Heart left ventricle (tissue), 16 donors: ENCODE measurements at regions of chr4 and their contacts with region 1.

Region 1: DNA sequence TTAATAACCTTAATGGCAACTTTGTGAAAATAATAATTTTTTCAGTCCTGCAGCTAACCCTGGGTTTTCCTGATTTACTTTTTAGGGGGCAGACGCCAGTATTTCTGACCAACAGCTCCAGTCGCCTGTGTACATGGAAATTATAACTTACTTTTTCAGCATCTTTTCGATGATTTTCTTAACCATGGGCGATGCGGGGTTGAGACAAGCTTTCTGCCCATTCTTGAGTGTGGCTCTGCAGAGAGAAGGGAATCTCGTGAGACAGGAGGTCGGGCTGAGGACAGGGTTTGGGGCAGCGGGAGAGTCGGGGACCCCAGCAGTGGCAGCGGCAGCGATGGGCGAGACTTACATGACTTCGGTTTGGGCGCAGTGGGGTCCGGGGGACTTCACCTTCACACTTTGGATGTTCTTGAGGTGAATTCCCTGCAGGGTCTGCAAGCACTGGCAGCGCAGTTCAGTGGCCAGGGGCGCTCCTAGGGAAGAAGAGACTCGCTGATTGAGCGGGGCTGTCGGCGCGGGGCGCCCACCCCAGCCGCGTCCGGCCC is 473 bp downstream of the CXCL2 start:
- DNase-seq: peak in 3 of 5 donors; percentile 26 to 52 (median 38)
- ATAC-seq: peak in 1 of 4 donors; percentile 21
- H3K4me3 ChIP-seq: peak overlapping the region; percentile 38 to 78 (median 65)
- H3K27ac ChIP-seq: peak overlapping the region; percentile 70 to 91 (median 85)
- H3K4me1 ChIP-seq: peaks cover 0 to 19% (median 2%) of the 10 kb centered on the region in 12 donors
- H3K27me3 ChIP-seq: peaks cover 0 to 5% (median 0%) of the 10 kb centered on the region in 9 donors
- CTCF ChIP-seq: no peak
- POLR2A ChIP-seq: no peak

Region 2: DNA sequence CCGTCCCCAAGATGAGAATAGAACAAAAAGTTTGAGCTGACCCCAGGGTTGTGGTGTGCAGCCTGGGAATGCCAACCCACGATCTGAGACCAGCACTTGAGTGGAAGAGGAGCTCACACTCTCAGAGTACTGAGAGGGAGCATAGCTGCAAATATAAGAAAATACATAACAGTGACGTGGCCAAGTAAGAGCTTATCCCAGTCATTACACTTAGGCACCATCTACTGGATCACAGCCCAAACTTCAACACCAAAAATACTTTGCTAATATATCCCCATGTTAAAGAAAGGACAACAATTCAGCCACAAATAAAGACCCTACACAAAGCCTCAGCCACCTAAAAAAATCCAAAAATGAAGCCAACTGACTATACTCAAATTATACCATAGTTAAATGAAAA is 295.3 kb before region 1 on chr4:
- intact Hi-C with region 1: no loop called
- DNase-seq: no peak
- ATAC-seq: no peak
- H3K4me3 ChIP-seq: no peak overlapping the region
- H3K27ac ChIP-seq: no peak overlapping the region
- H3K4me1 ChIP-seq: no peaks in the 10 kb centered on the region
- H3K27me3 ChIP-seq: no peaks in the 10 kb centered on the region
- CTCF ChIP-seq: no peak
- POLR2A ChIP-seq: no peak

Region 3: DNA sequence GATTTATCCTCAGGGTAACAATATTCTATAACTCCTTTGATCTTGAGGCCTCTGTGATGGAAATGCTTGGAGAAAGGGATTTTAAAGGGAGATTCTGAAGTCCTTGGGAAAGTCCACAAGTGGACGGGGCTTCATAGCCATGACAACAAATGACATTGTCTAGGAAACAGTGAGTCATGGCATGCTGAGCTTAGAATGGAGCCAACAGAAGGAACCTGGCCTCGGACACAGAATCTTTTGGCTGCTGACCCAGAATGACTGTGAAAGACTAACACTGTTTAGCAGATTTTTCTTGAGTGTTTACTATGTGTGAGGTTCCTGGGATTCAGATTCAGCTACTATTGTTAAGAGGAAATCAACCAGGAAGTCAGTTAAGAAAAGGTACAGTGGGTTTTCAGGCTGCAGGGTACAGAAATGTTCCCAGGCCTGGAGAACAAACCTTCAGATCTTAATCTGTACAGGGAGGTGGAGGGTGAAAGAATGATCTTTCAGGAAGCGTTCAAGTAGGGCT is 18.6 kb after region 1 on chr4:
- intact Hi-C with region 1: loop called in 1 of 10 experiments (anchors 2 kb)
- DNase-seq: peak in 4 of 5 donors; percentile 68 to 80 (median 78)
- ATAC-seq: peak; percentile 93 to 98 (median 98)
- H3K4me3 ChIP-seq: no peak overlapping the region
- H3K27ac ChIP-seq: peak overlapping the region; percentile 50 to 81 (median 68)
- H3K4me1 ChIP-seq: peaks cover 3 to 36% (median 21%) of the 10 kb centered on the region in 12 donors
- H3K27me3 ChIP-seq: no peaks in the 10 kb centered on the region
- CTCF ChIP-seq: no peak
- POLR2A ChIP-seq: no peak